ENCODE measurements at regions of chr3 and their contacts with region 1.

Region 1: DNA sequence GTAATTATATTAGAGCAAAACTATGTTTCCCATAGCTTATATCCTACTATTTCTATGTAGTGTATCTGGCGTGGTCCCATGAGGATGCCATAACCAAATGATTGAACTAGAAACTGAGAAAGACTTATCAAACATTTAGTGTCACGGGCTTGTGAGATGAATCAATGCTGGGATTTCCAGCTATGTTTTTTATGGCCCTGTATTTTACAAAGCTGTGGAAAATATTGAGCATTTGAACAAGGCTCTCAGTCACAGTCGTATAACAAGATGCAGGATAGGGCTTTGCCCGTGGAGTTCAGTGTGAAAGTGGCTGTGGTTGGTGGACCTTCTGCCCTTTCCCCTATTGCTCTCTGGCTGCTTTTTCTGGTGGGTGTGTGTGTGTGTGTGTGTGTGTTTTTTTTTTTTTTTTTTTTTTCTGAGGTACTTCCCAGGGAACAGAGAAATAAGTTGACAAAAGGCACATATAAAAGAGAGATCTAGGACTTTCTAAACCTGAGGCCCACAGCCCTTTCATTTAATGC is 60.7 kb downstream of the CACNA1D start:
- DNase-seq: no peak
- H3K4me3 Mint-ChIP-seq: no peak overlapping the region
- H3K27ac Mint-ChIP-seq: no peak overlapping the region
- H3K4me1 Mint-ChIP-seq: peaks cover 9% of the 10 kb centered on the region
- H3K27me3 Mint-ChIP-seq: no peaks in the 10 kb centered on the region
- CTCF ChIP-seq: no peak

Region 2: DNA sequence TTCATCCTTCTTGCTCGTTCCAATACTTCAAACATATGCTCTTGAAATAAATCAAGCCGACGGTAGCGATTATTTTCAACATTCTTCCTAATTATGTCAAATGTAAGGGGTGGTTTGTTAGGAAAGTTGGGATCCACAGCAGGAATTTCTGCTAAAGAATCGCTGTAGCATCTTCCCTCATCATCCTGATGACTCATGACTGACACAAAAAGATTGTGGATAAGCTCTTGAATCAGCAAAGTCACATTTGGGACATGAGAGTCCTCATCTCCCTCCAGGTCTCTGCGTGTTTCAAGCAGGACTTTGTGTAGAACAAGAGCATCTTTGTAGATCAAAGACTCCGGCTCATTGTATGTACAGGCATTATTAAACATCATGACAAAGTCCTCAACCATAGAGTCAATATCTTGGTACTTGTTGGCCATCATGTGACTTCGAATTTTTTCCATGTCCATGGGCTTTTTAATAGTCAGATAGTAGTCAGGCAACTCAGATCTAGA is 945.8 kb before region 1 on chr3:
- CTCF ChIA-PET with region 1: no interaction called
- intact Hi-C with region 1: no loop called
- DNase-seq: no peak
- H3K4me3 Mint-ChIP-seq: no peak overlapping the region
- H3K27ac Mint-ChIP-seq: no peak overlapping the region
- H3K4me1 Mint-ChIP-seq: peaks cover 11% of the 10 kb centered on the region
- H3K27me3 Mint-ChIP-seq: no peaks in the 10 kb centered on the region
- CTCF ChIP-seq: no peak

Region 3: DNA sequence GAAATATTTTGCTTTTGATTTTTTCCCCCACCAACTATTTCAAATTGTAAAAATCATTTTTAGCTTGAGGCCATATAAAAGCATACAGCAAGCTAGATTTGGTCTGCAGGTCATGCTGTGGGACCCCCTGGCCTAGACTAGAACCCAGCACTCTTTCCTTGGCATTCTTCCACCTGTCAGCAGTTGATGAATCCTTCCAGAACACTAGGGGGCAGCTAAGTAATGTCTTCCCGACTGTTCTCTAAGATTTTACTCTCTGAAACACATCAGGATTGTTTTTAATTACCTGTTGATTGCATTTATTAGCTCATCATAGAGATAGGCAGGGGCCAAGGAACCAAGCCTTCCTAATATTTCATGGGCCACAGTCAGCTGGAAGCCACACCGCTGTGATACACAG is 113.7 kb after region 1 on chr3:
- CTCF ChIA-PET with region 1: interaction called, 10 read pairs
- intact Hi-C with region 1: no loop called
- DNase-seq: no peak
- H3K4me3 Mint-ChIP-seq: no peak overlapping the region
- H3K27ac Mint-ChIP-seq: no peak overlapping the region
- H3K4me1 Mint-ChIP-seq: peaks cover 13% of the 10 kb centered on the region
- H3K27me3 Mint-ChIP-seq: no peaks in the 10 kb centered on the region
- CTCF ChIP-seq: no peak

Region 4: GRCh38 chr3:53821631-53822121 is 266.5 kb after region 1 on chr3:
- CTCF ChIA-PET with region 1: no interaction called
- intact Hi-C with region 1: no loop called
- DNase-seq: no peak
- H3K4me3 Mint-ChIP-seq: no peak overlapping the region
- H3K27ac Mint-ChIP-seq: no peak overlapping the region
- H3K4me1 Mint-ChIP-seq: peaks cover 8% of the 10 kb centered on the region
- H3K27me3 Mint-ChIP-seq: no peaks in the 10 kb centered on the region
- CTCF ChIP-seq: no peak

Measured in Calu3 (cell line).